Common myeloid progenitor, CD34-positive (primary cell): ENCODE measurements at regions of chr2 and their contacts with region 1.

Region 1: GRCh38 chr2:43005245-43005974 is 213.0 kb upstream of the HAAO start:
- DNase-seq: peak; percentile 57 to 85 (median 70)
- H3K4me3 ChIP-seq: peak overlapping the region; percentile 30 to 79 (median 65)
- H3K27ac ChIP-seq: peak overlapping the region; percentile 60 to 78
- H3K4me1 ChIP-seq: peaks cover 2 to 47% (median 37%) of the 10 kb centered on the region in 4 experiments
- H3K27me3 ChIP-seq: no peaks in the 10 kb centered on the region

Region 2: GRCh38 chr2:42917425-42917927 is 87.9 kb before region 1 on chr2:
- CTCF ChIA-PET with region 1: no interaction called
- POLR2A ChIA-PET with region 1: no interaction called
- DNase-seq: no peak
- H3K4me3 ChIP-seq: peak overlapping the region in 1 of 7 experiments; percentile 14
- H3K27ac ChIP-seq: no peak overlapping the region
- H3K4me1 ChIP-seq: peaks cover 2 to 49% (median 19%) of the 10 kb centered on the region in 4 experiments
- H3K27me3 ChIP-seq: no peaks in the 10 kb centered on the region

Region 3: DNA sequence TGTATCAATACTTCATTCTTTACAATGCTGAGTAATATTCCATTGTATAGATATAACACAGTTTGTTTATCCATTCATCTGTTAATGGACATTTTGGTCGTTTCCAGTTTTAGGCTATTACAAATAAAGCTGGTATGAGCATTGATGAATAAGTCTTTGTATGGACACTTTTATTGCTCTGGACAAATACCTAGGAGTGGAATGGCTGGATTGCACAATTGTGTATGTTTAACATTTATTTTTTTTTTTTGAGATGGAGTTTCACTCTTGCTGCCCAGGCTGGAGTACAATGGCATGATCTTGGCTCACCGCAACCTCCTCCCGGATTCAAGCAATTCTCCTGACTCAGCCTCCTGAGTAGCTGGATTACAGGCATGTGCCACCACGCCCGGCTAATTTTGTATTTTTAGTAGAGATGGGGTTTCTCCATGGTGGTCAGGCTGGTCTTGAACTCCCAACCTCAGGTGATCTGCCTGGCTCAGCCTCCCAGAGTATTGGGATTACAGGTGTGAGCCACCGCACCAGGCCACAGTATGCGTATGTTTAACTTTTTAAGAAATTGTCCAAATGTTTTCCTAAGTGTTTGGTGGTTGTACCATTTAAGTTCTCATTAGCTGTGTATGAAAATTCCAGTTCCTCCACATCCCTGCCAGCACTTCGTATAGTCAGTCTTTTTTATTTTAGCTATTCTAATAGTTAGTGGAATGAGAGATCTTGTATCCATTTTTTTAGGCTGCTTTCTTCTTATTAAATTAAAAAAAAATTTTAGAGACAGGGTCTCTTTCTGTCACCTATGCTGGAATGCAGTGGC is 18.1 kb before region 1 on chr2:
- CTCF ChIA-PET with region 1: interaction called, 17 read pairs
- POLR2A ChIA-PET with region 1: interaction called, 3 read pairs
- DNase-seq: no peak
- H3K4me3 ChIP-seq: no peak overlapping the region
- H3K27ac ChIP-seq: no peak overlapping the region
- H3K4me1 ChIP-seq: peaks cover 0 to 6% (median 0%) of the 10 kb centered on the region in 4 experiments
- H3K27me3 ChIP-seq: no peaks in the 10 kb centered on the region

Region 4: GRCh38 chr2:43018179-43019024 is 13.0 kb after region 1 on chr2:
- CTCF ChIA-PET with region 1: interaction called, 53 read pairs
- POLR2A ChIA-PET with region 1: interaction called, 3 read pairs
- DNase-seq: no peak
- H3K4me3 ChIP-seq: no peak overlapping the region
- H3K27ac ChIP-seq: no peak overlapping the region
- H3K4me1 ChIP-seq: peaks cover 6 to 33% (median 15%) of the 10 kb centered on the region in 4 experiments
- H3K27me3 ChIP-seq: no peaks in the 10 kb centered on the region

Region 5: GRCh38 chr2:43024515-43025011 is 19.2 kb after region 1 on chr2:
- CTCF ChIA-PET with region 1: interaction called, 53 read pairs
- POLR2A ChIA-PET with region 1: interaction called, 3 read pairs
- DNase-seq: peak; percentile 41 to 63 (median 52)
- H3K4me3 ChIP-seq: no peak overlapping the region
- H3K27ac ChIP-seq: no peak overlapping the region
- H3K4me1 ChIP-seq: peaks cover 2 to 34% (median 29%) of the 10 kb centered on the region in 4 experiments
- H3K27me3 ChIP-seq: no peaks in the 10 kb centered on the region

Region 6: GRCh38 chr2:43194121-43194869 is 188.9 kb after region 1 on chr2:
- CTCF ChIA-PET with region 1: no interaction called
- POLR2A ChIA-PET with region 1: no interaction called
- DNase-seq: peak in 1 of 3 donors; percentile 33
- H3K4me3 ChIP-seq: peak overlapping the region in 2 of 7 experiments; percentile 20 to 55
- H3K27ac ChIP-seq: peak overlapping the region in 1 of 2 experiments; percentile 82
- H3K4me1 ChIP-seq: peaks cover 15 to 76% (median 52%) of the 10 kb centered on the region in 4 experiments
- H3K27me3 ChIP-seq: no peaks in the 10 kb centered on the region